Natural killer cell (primary cell): ENCODE measurements at regions of chr13 and their contacts with region 1.

Region 1: GRCh38 chr13:108322206-108322824 is 52.8 kb downstream of the TNFSF13B start:
- DNase-seq: peak in 1 of 2 donors; percentile 67
- ATAC-seq: peak; percentile 73 to 87 (median 85)
- H3K4me3 ChIP-seq: no peak overlapping the region
- H3K4me3 Mint-ChIP-seq: no peak overlapping the region
- H3K27ac ChIP-seq: no peak overlapping the region
- H3K27ac Mint-ChIP-seq: no peak overlapping the region
- H3K4me1 ChIP-seq: peaks cover 3% of the 10 kb centered on the region
- H3K4me1 Mint-ChIP-seq: peaks cover 0 to 11% of the 10 kb centered on the region in 2 donors
- H3K27me3 ChIP-seq: no peaks in the 10 kb centered on the region
- H3K27me3 Mint-ChIP-seq: peaks cover 11 to 26% of the 10 kb centered on the region in 2 donors
- CTCF ChIP-seq: peak; percentile 88

Region 2: DNA sequence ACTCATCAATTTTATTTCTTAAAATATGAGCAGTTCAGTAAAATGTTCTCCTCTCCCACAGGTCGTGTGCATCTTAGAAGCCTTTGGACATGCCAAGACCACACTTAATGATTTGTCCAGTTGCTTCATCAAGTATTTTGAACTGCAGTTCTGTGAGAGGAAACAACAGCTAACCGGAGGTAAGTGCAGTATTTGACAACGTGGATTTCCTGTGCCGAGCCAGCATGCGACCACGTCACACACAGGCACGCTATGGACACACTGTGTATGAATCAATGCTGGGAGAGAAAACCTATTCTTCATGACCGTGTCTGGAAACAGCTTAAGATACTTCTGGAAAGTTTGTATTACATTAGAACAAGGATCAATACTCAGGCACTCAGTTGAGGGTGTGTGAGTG is 575.6 kb after region 1 on chr13:
- intact Hi-C with region 1: loop called (anchors 1 kb)
- DNase-seq: peak in 1 of 2 donors; percentile 18
- ATAC-seq: peak in 1 of 3 donors; percentile 52
- H3K4me3 ChIP-seq: no peak overlapping the region
- H3K4me3 Mint-ChIP-seq: no peak overlapping the region
- H3K27ac ChIP-seq: no peak overlapping the region
- H3K27ac Mint-ChIP-seq: no peak overlapping the region
- H3K4me1 ChIP-seq: no peaks in the 10 kb centered on the region
- H3K4me1 Mint-ChIP-seq: peaks cover 0 to 5% of the 10 kb centered on the region in 2 donors
- H3K27me3 ChIP-seq: no peaks in the 10 kb centered on the region
- H3K27me3 Mint-ChIP-seq: peaks cover 0 to 4% of the 10 kb centered on the region in 2 donors
- CTCF ChIP-seq: no peak